Activated T-helper 2 cell treated with anti-CD3 and anti-CD28 coated beads, Interferon-gamma antibody, Interleukin-2, Interleukin-4, amounts not matched to agents 10 μg/mL and 5 μg/mL and 100 μg/mL, durations not matched to agents 14 hours and 24 hours and 36 hours (primary cell): ENCODE measurements at regions of chr12 and their contacts with region 1.

Region 1: GRCh38 chr12:87995581-87996178 is 33.5 kb downstream of the C12orf50 start:
- DNase-seq: peak; percentile 13
- H3K4me3 Mint-ChIP-seq: no peak overlapping the region
- H3K27ac Mint-ChIP-seq: no peak overlapping the region
- H3K4me1 Mint-ChIP-seq: peaks cover 2% of the 10 kb centered on the region
- H3K27me3 Mint-ChIP-seq: no peaks in the 10 kb centered on the region

Region 2: DNA sequence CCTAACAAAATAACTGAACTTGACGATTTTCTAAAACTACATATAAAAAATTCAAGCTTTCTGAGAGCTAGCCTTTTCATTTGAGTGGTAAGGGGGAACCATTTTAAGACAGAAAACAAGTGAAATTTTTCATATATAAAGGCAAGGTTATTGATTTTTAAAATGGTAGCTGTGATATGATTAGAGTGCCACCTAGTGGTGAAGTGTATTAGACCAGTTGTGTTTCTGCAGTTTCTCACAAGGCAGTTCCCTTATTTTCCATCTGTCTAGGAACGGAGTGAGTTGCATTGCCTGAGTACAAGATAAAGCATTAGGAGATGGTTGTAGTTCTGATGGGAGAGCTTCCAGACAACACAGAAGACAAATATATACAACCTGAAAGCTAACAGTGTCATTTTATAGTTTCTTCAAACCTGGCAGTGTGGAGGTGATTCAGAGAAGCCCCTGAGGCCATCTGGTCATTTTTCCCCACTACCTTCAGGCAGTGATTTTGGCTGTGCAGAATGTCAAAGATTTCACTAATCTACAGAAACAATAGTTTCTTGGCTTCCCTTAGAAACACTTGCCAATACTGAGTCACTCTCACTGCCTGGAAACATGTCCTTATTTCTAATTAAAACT is 147.3 kb before region 1 on chr12:
- intact Hi-C with region 1: loop called (anchors 5 kb)
- DNase-seq: no peak
- H3K4me3 Mint-ChIP-seq: no peak overlapping the region
- H3K27ac Mint-ChIP-seq: no peak overlapping the region
- H3K4me1 Mint-ChIP-seq: no peaks in the 10 kb centered on the region
- H3K27me3 Mint-ChIP-seq: no peaks in the 10 kb centered on the region